Caki2 (cell line): ENCODE measurements at regions of chr12 and their contacts with region 1.

Region 1: DNA sequence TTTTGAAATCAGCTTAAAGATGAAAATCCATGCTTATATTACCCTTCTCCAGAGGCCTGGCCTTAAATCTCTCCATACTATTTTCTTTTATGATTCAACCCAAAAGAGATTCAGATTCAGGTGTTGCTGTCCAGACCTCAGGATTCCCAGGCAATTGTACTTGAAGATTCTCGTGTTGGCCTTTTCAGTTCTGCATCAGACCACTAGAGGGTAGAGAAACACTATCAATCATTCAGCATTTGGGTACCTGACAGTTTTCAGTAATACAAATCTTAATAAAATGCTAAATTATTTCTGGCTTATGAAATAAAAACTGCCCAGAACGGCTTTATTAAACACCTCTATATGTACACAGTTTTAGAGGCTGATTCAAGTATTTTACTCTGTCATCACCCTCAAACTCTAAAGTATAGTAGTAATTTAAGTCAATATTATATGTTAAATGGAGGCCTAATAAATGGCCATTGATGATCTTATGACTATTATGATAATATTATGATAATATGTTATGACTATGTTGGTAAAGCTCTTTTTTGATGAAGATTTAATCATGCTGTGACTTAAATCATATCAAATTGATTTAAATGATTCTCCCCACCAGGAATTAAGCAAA is 301.1 kb downstream of the DUSP6 start:
- DNase-seq: peak; percentile 40

Region 2: DNA sequence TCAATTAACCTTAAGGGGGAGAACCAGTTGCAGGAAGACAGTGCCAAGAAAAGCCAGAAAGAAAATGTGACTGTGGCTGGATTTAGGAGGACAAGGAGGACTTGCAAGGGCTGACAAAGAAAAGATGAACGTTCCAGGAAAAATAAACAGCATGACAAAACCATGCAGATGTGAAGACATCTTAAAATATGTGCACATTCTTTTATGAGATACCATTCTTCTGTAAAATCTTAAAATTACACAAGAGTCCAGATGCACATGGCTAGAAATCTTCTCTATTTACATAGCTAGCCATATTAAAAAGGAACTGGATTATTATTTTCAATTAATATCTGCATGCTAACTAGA is 504.3 kb before region 1 on chr12:
- in situ Hi-C with region 1: no loop called
- DNase-seq: no peak

Region 3: GRCh38 chr12:89461649-89462612 is 410.8 kb after region 1 on chr12:
- in situ Hi-C with region 1: loop called (anchors 25 kb)
- DNase-seq: peak; percentile 57